WTC11 (cell line): ENCODE measurements at regions of chr9 and their contacts with region 1.

Region 1: GRCh38 chr9:124537926-124538325 is 30.7 kb upstream of the NR5A1 start:
- DNase-seq: no peak
- ATAC-seq: no peak
- H3K4me3 Mint-ChIP-seq: no peak overlapping the region
- H3K27ac Mint-ChIP-seq: no peak overlapping the region
- H3K4me1 Mint-ChIP-seq: no peaks in the 10 kb centered on the region
- H3K27me3 Mint-ChIP-seq: no peaks in the 10 kb centered on the region
- CTCF ChIP-seq: no peak

Region 2: DNA sequence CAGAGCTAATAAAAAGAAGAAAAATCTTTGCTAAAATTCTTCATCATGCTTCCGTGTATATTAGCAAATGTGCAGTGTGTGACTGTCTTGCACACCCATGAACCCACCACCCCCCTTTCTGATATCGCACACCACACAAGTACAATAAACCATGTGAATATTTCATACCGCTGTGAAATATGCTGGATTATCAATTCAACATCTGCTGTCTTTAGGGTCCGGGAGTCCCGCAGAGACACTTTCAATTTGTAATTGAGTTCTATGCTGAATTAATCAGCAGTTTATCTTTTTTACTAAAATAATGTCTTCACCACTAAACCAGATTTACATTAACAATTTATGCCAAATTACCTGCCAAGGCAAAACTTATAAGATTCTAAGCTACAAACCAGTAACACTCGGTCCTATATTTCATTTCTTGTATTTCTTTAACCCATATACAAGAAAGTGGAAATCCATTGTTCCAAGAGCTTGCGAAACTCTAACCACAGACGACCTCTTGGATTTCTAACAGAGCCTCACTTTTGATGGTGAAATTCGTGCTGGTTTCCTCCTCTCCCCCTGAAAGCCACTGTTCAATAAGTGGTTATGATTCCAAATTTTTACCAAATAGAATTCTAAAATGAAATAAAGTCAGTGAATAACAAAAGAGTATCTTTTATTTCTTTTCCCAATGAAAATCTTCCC is 166.9 kb before region 1 on chr9:
- CTCF ChIA-PET with region 1: no interaction called
- POLR2A ChIA-PET with region 1: no interaction called
- DNase-seq: no peak
- ATAC-seq: no peak
- H3K4me3 Mint-ChIP-seq: no peak overlapping the region
- H3K27ac Mint-ChIP-seq: no peak overlapping the region
- H3K4me1 Mint-ChIP-seq: peaks cover 34% of the 10 kb centered on the region
- H3K27me3 Mint-ChIP-seq: no peaks in the 10 kb centered on the region
- CTCF ChIP-seq: no peak

Region 3: GRCh38 chr9:124450241-124450924 is 87.5 kb before region 1 on chr9 and contains the start of gene ADGRD2:
- CTCF ChIA-PET with region 1: interaction called, 10 read pairs
- POLR2A ChIA-PET with region 1: no interaction called
- DNase-seq: peak; percentile 89
- ATAC-seq: peak; percentile 84
- H3K4me3 Mint-ChIP-seq: peak within 1 kb of the TSS; percentile 78
- H3K27ac Mint-ChIP-seq: no peak within 1 kb of the TSS
- H3K4me1 Mint-ChIP-seq: peaks cover 17% of the 10 kb centered on the region
- H3K27me3 Mint-ChIP-seq: peaks cover 38% of the 10 kb centered on the region
- CTCF ChIP-seq: no peak
- total RNA-seq, gene ADGRD2: 0.61 to 1.6 TPM (median 1.3 TPM) in 3 replicates

Region 4: DNA sequence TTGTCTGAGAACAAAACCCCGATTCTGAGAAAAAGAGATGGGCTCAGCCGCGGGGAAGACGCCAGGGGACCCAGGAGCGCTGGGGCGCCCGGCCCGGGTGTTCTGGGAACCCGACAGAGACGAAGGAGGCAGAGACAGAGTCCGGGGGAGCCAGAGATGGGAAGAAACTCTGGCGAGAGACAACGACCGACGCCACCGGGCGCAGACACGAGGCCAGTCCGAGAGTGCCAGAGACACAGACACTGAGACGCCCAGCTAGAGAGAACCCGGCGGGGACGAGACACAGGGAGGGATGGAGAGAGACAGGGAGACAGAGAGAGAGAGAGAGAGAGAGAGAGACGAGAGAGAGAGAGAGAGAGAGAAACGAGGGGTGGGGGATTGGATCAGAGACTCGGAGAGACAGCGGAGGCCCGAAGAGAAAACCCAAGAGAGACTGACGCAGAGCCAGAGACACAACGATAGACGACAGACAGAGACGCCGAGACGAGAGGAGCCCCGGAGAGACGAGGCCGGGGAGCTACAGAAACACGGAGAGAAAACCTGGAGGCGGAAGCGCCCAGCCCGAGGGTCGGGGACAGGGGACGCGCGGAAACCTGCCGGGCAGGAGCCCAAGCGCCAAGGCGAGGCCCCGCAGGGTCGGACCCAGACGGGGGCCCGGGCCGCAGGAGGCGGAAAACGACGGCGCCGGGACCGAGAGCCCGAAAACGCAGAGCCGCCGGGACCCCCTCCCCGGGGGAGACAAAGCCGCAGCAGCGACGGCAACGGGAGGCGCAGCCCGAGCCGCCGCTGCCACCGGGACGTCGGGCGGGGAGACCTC is 34.0 kb before region 1 on chr9:
- CTCF ChIA-PET with region 1: interaction called, 15 read pairs
- POLR2A ChIA-PET with region 1: no interaction called
- DNase-seq: peak; percentile 35
- ATAC-seq: peak; percentile 3; the same call in 1 of the 2 replicates
- H3K4me3 Mint-ChIP-seq: peak overlapping the region; percentile 85
- H3K27ac Mint-ChIP-seq: no peak overlapping the region
- H3K4me1 Mint-ChIP-seq: peaks cover 13% of the 10 kb centered on the region
- H3K27me3 Mint-ChIP-seq: peaks cover 59% of the 10 kb centered on the region
- CTCF ChIP-seq: no peak

Region 5: GRCh38 chr9:124522121-124523098 is 15.5 kb before region 1 on chr9:
- CTCF ChIA-PET with region 1: interaction called, 41 read pairs
- POLR2A ChIA-PET with region 1: no interaction called
- DNase-seq: peak; percentile 75
- ATAC-seq: peak; percentile 97
- H3K4me3 Mint-ChIP-seq: no peak overlapping the region
- H3K27ac Mint-ChIP-seq: peak overlapping the region; percentile 80
- H3K4me1 Mint-ChIP-seq: 0 out of 2 replicates have a peak, but pooled peaks cover 3% of the 10 kb centered on the region
- H3K27me3 Mint-ChIP-seq: no peaks in the 10 kb centered on the region
- CTCF ChIP-seq: no peak

Region 6: DNA sequence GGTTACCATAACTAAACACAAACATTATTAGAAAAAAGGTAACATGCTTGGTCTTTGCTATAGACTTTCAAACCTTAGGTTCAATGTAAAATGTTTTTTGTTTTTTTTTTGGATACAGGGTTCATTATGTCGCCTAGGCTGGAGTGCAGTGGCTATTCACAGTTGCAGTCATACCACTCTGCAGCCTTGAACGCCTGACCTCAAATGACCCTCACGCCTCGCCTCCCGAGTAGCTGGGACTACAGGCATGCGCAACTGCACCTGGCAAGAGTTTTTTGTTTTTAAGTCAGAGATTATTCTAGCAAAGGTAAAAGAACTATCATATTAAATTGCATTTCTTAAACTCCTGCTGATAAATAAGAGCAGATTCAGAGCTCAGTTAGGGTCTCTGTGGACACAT is 24.4 kb after region 1 on chr9:
- CTCF ChIA-PET with region 1: interaction called, 19 read pairs
- POLR2A ChIA-PET with region 1: no interaction called
- DNase-seq: no peak
- ATAC-seq: no peak
- H3K4me3 Mint-ChIP-seq: no peak overlapping the region
- H3K27ac Mint-ChIP-seq: no peak overlapping the region
- H3K4me1 Mint-ChIP-seq: peaks cover 29% of the 10 kb centered on the region
- H3K27me3 Mint-ChIP-seq: no peaks in the 10 kb centered on the region
- CTCF ChIP-seq: no peak

Region 7: DNA sequence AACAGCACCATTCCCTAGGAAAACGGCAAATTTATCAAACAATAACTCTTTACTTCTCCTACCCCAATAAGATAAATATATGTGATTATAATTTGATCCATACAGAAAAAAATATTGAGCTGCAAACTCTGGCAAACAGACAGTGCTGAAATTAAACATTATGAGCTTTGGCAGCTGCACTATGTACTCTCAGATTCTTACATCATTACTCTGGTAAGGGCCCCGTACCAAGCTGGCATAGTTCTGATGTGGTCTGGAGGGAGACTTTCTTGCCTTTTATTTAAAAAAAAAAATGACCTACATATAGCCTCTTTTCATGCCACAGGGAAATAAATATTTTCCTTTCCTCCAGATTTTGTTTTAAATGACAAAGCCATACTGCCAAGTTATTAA is 138.2 kb after region 1 on chr9:
- CTCF ChIA-PET with region 1: interaction called, 6 read pairs
- POLR2A ChIA-PET with region 1: interaction called, 12 read pairs
- DNase-seq: no peak
- ATAC-seq: no peak
- H3K4me3 Mint-ChIP-seq: no peak overlapping the region
- H3K27ac Mint-ChIP-seq: no peak overlapping the region
- H3K4me1 Mint-ChIP-seq: peaks cover 17% of the 10 kb centered on the region
- H3K27me3 Mint-ChIP-seq: no peaks in the 10 kb centered on the region
- CTCF ChIP-seq: no peak

Region 8: GRCh38 chr9:124697326-124698200 is 159.6 kb after region 1 on chr9:
- CTCF ChIA-PET with region 1: no interaction called
- POLR2A ChIA-PET with region 1: no interaction called
- DNase-seq: no peak
- ATAC-seq: no peak
- H3K4me3 Mint-ChIP-seq: no peak overlapping the region
- H3K27ac Mint-ChIP-seq: peak overlapping the region; percentile 51
- H3K4me1 Mint-ChIP-seq: peaks cover 62% of the 10 kb centered on the region
- H3K27me3 Mint-ChIP-seq: no peaks in the 10 kb centered on the region
- CTCF ChIP-seq: no peak